ENCODE measurements at regions of chr19 and their contacts with region 1.

Region 1: GRCh38 chr19:18450931-18451845 is 13.3 kb upstream of the ISYNA1 start:
- DNase-seq: peak; percentile 96
- H3K4me3 ChIP-seq: no peak overlapping the region
- H3K27ac ChIP-seq: peak overlapping the region in 2 of 4 donors; percentile 35 to 40
- H3K4me1 ChIP-seq: peaks cover 11 to 30% (median 20%) of the 10 kb centered on the region in 4 donors
- H3K27me3 ChIP-seq: no peaks in the 10 kb centered on the region
- CTCF ChIP-seq: peak in 2 of 3 experiments; percentile 98 to 99
- EP300 ChIP-seq: no peak
- POLR2A ChIP-seq: no peak

Region 2: DNA sequence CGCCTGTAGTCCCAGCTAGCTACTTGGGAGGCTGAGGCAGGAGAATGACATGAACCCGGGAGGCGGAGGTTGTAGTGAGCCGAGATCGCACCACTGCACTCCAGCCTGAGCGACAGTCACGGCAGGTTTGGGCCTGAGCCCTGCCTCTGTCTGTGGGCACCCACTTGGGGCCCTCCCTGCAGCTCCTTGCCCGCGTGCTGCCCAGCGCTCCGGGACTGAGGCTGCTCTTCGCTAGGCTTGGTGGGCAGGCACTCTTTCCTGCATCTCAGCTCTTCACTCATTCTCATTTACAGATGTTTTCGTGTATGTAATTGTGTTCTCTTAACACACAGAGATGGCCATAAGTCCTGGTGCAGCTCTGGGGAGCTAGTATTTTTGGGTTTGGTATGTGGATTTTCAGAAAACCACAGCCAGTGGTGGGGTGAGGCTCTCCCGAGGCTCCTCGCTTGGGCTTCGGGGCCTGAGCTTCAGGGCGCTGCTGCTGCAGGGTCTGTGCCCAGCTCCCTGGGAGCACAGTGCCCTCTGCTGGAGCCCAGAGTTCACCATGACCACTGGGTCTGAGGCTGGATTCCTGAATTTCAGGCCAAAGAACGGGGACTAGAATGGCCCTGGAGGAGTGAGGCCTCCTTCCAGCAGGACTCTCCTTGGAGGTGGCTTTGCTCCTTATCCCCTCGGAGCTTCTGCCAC is 395.8 kb after region 1 on chr19:
- intact Hi-C with region 1: loop called (anchors 5 kb)
- DNase-seq: no peak
- H3K4me3 ChIP-seq: peak overlapping the region in 1 of 4 donors; percentile 7
- H3K27ac ChIP-seq: peak overlapping the region; percentile 75 to 81 (median 76)
- H3K4me1 ChIP-seq: peaks cover 69 to 95% (median 87%) of the 10 kb centered on the region in 4 donors
- H3K27me3 ChIP-seq: no peaks in the 10 kb centered on the region
- CTCF ChIP-seq: peak; percentile 84 to 94 (median 84)
- EP300 ChIP-seq: no peak
- POLR2A ChIP-seq: no peak

Measured in esophagus muscularis mucosa (tissue), 4 donors.